Heart left ventricle (tissue), 16 donors: ENCODE measurements at regions of chr6 and their contacts with region 1.

Region 1: DNA sequence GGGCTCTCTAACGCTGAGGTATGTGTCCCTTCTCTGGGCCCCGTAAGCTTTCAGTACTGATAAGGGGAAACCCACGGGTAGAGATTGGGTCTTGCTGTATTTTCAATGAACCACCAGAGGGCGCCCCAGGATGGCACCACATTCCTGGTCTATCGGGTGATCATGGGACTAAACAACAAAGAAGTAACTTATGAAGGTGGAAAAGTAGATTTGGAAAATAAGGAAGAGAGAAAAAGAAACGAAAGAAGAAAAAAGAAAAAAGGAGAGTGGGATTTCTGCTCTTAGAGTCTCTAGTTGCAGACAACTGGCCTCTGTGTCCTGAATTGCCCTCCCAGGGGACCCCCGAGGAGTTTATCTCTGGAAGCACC is 93.8 kb downstream of the GMPR start:
- DNase-seq: peak; percentile 68 to 82 (median 81)
- ATAC-seq: peak; percentile 72 to 87 (median 78)
- H3K4me3 ChIP-seq: peak overlapping the region in 1 of 12 donors; percentile 3
- H3K27ac ChIP-seq: peak overlapping the region in 3 of 12 donors; percentile 5 to 41 (median 41)
- H3K4me1 ChIP-seq: peaks cover 11 to 60% (median 34%) of the 10 kb centered on the region in 12 donors
- H3K27me3 ChIP-seq: no peaks in the 10 kb centered on the region
- CTCF ChIP-seq: peak; percentile 87 to 97 (median 92)
- POLR2A ChIP-seq: no peak

Region 2: DNA sequence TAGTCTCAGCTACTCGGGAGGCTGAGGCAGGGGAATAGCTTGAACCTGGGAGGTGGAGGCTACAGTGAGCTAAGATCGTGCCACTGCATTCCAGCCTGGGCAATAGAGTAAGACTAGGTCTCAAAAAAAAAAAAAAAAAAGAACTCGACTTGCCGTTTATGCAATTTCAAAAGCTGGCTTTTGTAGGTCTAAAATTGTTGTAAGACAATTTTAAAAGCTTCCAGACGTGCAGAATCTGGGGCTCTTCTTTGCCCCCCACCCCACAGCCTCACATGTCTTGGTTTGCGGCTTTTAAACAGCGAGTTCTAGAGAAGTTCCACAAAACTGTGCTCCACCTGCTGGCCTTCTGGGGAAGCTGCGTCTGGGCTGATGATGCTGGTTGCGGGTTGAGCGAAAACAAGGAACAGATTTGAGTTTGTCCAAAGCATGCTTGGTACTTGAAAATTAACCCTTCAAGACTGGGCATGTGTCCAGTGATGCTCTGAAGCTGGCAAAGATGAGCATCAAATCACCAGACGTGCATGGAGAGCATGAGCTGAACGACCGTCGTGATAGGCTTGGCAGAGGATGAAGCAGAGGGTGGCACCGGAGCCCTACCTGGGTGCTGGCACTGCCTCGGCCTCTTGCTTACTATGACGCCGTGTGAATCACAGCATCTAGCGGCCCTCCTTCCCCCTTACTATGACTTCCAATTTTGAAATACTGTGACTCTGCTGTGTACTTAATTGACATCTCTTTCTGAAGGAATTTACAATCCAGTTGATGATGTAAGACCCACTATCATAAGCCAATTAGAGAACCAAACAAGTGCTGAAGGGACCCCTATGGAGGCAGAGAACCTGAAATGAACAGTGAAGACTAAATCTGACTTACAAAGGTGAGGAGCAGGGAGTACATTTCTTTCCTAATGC is 77.6 kb after region 1 on chr6:
- intact Hi-C with region 1: loop called (anchors 1 to 5 kb)
- DNase-seq: peak in 4 of 5 donors; percentile 48 to 68 (median 58)
- ATAC-seq: peak in 3 of 4 donors; percentile 53 to 70 (median 61)
- H3K4me3 ChIP-seq: no peak overlapping the region
- H3K27ac ChIP-seq: no peak overlapping the region
- H3K4me1 ChIP-seq: peaks cover 0 to 55% (median 17%) of the 10 kb centered on the region in 12 donors
- H3K27me3 ChIP-seq: no peaks in the 10 kb centered on the region
- CTCF ChIP-seq: peak; percentile 64 to 88 (median 80)
- POLR2A ChIP-seq: no peak

Region 3: GRCh38 chr6:16503970-16504415 is 171.8 kb after region 1 on chr6:
- intact Hi-C with region 1: loop called in 3 of 10 experiments (anchors 5 to 10 kb)
- DNase-seq: no peak
- ATAC-seq: peak in 1 of 4 donors; percentile 13
- H3K4me3 ChIP-seq: no peak overlapping the region
- H3K27ac ChIP-seq: no peak overlapping the region
- H3K4me1 ChIP-seq: peaks cover 0 to 26% (median 14%) of the 10 kb centered on the region in 12 donors
- H3K27me3 ChIP-seq: no peaks in the 10 kb centered on the region
- CTCF ChIP-seq: no peak
- POLR2A ChIP-seq: no peak

Region 4: DNA sequence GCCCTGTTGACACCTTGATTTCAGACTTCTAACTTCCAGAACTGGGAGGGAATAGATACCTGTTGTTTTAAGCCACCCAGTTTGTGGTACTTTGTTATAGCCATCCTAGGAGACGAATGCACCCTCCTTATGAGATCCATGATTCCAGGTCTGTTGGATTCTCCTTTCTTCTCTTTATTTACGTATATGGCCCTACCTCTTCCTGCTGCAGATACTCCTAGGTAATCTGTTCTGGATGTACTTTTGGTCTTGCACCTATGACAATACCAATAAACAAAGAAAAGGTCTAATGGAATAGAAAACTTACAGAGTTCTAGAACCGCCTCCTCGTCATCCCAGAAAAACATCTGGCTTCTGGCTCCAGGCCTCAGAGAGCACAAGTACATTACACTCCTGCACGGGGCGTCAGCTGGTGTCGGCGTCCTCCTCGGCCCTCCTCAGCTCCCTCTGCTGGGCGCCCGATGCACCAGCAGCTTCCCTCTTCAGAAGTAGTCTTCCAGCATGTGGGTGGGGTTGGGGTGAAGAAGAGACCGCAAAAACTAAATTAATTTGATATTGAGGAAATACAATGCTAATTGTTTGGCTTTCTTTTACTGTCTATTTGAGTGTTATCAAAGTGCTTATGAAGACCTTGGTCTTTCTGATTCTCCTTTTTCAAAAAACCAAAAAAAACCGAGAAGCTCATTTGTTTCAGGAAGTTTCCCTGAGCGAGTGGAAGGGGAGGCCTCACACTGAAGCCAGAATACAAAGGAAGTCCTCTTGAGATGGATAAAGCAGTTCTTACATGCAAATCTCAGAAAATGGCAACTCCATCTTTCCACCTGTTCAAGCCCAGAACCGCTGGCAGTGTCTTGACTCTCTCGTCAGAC is 438.8 kb after region 1 on chr6:
- intact Hi-C with region 1: loop called in 2 of 10 experiments (anchors 5 to 10 kb)
- DNase-seq: peak; percentile 80 to 91 (median 84)
- ATAC-seq: peak; percentile 78 to 91 (median 85)
- H3K4me3 ChIP-seq: no peak overlapping the region
- H3K27ac ChIP-seq: peak overlapping the region in 4 of 12 donors; percentile 11 to 63 (median 28)
- H3K4me1 ChIP-seq: peaks cover 0 to 45% (median 31%) of the 10 kb centered on the region in 12 donors
- H3K27me3 ChIP-seq: no peaks in the 10 kb centered on the region
- CTCF ChIP-seq: peak; percentile 88 to 99 (median 93)
- POLR2A ChIP-seq: no peak

Region 5: GRCh38 chr6:17086469-17086868 is 754.3 kb after region 1 on chr6:
- intact Hi-C with region 1: loop called in 2 of 10 experiments (anchors 10 kb)
- DNase-seq: peak in 3 of 5 donors; percentile 45 to 46 (median 46)
- ATAC-seq: peak; percentile 75 to 85 (median 78)
- H3K4me3 ChIP-seq: no peak overlapping the region
- H3K27ac ChIP-seq: no peak overlapping the region
- H3K4me1 ChIP-seq: peaks cover 0 to 7% (median 0%) of the 10 kb centered on the region in 12 donors
- H3K27me3 ChIP-seq: no peaks in the 10 kb centered on the region
- CTCF ChIP-seq: peak; percentile 44 to 72 (median 66)
- POLR2A ChIP-seq: no peak